Activated T-helper 2 cell treated with anti-CD3 and anti-CD28 coated beads, Interferon-gamma antibody, Interleukin-2, Interleukin-4, amounts not matched to agents 10 μg/mL and 5 μg/mL and 100 μg/mL, durations not matched to agents 14 hours and 24 hours and 36 hours (primary cell): ENCODE measurements at regions of chr3 and their contacts with region 1.

Region 1: GRCh38 chr3:71006810-71007785 is 576.4 kb downstream of the FOXP1 start:
- DNase-seq: no peak
- H3K4me3 Mint-ChIP-seq: no peak overlapping the region
- H3K27ac Mint-ChIP-seq: no peak overlapping the region
- H3K4me1 Mint-ChIP-seq: peaks cover 59% of the 10 kb centered on the region
- H3K27me3 Mint-ChIP-seq: no peaks in the 10 kb centered on the region

Region 2: DNA sequence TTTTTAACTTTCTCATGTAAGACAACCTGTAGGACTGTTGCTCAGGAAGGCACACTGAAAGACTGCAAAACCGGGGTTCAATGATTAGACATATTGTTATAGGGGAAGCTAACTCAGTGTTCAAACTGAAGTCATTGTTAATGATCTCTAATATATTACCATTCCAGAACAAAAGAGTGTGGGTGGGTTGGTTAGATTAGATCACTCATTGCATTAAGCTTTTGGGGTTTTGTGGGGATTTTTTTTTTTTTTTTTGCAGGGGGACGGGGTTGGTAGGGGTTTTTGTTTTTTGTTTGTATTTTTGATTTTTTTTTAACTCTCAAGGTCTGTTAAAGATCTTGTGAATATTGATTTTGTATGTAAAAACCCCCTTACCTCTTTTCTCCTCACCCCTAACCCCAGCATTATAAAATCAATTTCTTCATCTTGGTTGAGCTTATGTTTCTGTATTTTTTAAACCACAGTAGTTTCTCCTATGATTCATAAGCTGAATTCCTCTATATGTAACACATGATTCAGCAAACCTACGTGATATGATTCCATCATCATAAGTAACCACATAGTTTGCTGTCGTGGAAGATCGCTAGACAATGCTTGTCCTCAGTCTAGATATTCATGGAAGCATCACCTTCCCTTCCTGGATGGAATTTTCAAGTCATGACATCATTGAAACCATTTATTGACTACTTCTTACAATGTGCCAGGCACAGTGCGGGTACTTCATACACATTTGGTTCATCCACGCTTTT is 150.5 kb before region 1 on chr3:
- intact Hi-C with region 1: loop called (anchors 2 kb)
- DNase-seq: no peak
- H3K4me3 Mint-ChIP-seq: no peak overlapping the region
- H3K27ac Mint-ChIP-seq: peak overlapping the region; percentile 45
- H3K4me1 Mint-ChIP-seq: peaks cover 28% of the 10 kb centered on the region
- H3K27me3 Mint-ChIP-seq: peaks cover 26% of the 10 kb centered on the region

Region 3: GRCh38 chr3:70982700-70983140 is 24.4 kb before region 1 on chr3:
- intact Hi-C with region 1: loop called (anchors 2 kb)
- DNase-seq: no peak
- H3K4me3 Mint-ChIP-seq: peak overlapping the region; percentile 27
- H3K27ac Mint-ChIP-seq: peak overlapping the region; percentile 95
- H3K4me1 Mint-ChIP-seq: peaks cover 46% of the 10 kb centered on the region
- H3K27me3 Mint-ChIP-seq: no peaks in the 10 kb centered on the region

Region 4: GRCh38 chr3:71026634-71027578 is 19.8 kb after region 1 on chr3:
- intact Hi-C with region 1: loop called (anchors 2 kb)
- DNase-seq: no peak
- H3K4me3 Mint-ChIP-seq: no peak overlapping the region
- H3K27ac Mint-ChIP-seq: peak overlapping the region; percentile 58
- H3K4me1 Mint-ChIP-seq: peaks cover 52% of the 10 kb centered on the region
- H3K27me3 Mint-ChIP-seq: no peaks in the 10 kb centered on the region

Region 5: DNA sequence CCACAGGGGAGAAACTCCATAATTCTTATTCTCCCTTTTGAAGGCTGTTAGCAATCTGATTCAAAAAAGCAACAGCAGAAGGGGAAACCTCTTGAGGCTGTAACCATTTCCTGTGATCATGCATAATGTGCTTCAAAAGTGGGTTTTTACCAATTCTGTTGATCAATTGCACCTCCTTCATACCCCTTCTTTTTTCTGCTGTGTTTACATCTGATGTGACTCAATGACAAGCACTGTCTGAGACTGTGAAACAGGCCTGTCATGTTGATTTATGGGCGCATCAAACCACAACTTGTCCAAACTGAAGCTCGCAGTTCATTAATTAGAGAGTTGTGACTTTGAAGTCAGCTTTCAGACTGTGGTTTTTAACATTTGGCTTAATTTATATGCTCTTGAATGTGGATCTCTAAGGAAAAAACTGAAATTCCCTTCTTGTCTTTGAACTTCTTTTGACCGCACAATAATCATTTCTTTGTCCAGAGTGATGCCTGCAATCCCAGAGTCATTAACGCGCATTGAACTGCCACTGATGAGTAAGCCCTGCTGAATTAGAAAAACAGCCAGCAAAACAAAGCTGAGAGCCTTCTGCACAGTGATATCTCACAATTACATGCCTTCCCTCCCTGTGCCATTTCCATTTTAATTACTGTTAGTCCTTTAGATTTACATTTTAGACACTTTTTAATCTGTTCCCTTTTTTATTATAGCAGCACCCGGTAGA is 43.6 kb after region 1 on chr3:
- intact Hi-C with region 1: loop called (anchors 1 kb)
- DNase-seq: no peak
- H3K4me3 Mint-ChIP-seq: peak overlapping the region; percentile 2
- H3K27ac Mint-ChIP-seq: peak overlapping the region; percentile 86
- H3K4me1 Mint-ChIP-seq: peaks cover 95% of the 10 kb centered on the region
- H3K27me3 Mint-ChIP-seq: no peaks in the 10 kb centered on the region

Region 6: DNA sequence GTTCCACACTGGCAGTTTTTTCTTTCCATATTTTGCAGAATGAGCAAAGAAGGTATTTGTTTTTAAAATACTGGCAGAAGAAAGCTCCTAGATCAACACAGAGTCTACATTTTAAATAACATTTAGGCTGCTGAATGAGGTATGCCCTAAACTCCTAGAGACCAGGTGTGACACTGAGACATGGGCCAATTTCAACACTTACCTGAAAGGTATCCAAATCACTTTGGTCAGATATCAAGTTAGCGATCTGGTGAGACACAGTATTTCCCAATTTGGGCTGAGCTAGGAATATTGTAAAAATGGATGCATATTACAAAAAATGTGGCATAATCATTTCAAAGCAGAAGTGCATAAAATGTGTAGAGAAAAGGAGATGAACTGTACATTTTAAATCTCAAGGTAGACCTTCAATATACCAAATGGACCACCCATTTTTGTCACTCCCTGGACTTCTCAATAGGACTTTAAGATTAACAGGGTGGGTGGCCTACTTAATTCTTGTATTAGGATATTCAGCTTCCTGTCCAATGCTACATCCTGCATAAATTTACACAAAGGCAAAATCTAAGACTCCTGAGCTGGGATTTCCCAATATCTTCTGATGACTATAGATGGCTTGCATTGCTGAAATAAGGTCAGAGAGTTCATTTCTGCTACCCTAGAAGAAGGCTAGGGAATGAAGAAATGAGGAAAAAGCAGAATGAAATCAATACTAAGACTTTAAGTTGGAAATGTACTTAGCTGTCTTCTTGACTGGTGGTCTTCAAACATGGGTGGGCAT is 88.6 kb after region 1 on chr3:
- intact Hi-C with region 1: no loop called
- DNase-seq: no peak
- H3K4me3 Mint-ChIP-seq: no peak overlapping the region
- H3K27ac Mint-ChIP-seq: no peak overlapping the region
- H3K4me1 Mint-ChIP-seq: peaks cover 62% of the 10 kb centered on the region
- H3K27me3 Mint-ChIP-seq: no peaks in the 10 kb centered on the region

Region 7: GRCh38 chr3:71195492-71195891 is 188.4 kb after region 1 on chr3:
- intact Hi-C with region 1: loop called (anchors 5 kb)
- DNase-seq: no peak
- H3K4me3 Mint-ChIP-seq: no peak overlapping the region
- H3K27ac Mint-ChIP-seq: no peak overlapping the region
- H3K4me1 Mint-ChIP-seq: peaks cover 53% of the 10 kb centered on the region
- H3K27me3 Mint-ChIP-seq: no peaks in the 10 kb centered on the region

Region 8: GRCh38 chr3:71423151-71423906 is 416.2 kb after region 1 on chr3:
- intact Hi-C with region 1: no loop called
- DNase-seq: no peak
- H3K4me3 Mint-ChIP-seq: no peak overlapping the region
- H3K27ac Mint-ChIP-seq: peak overlapping the region; percentile 83
- H3K4me1 Mint-ChIP-seq: peaks cover 61% of the 10 kb centered on the region
- H3K27me3 Mint-ChIP-seq: no peaks in the 10 kb centered on the region

Region 9: DNA sequence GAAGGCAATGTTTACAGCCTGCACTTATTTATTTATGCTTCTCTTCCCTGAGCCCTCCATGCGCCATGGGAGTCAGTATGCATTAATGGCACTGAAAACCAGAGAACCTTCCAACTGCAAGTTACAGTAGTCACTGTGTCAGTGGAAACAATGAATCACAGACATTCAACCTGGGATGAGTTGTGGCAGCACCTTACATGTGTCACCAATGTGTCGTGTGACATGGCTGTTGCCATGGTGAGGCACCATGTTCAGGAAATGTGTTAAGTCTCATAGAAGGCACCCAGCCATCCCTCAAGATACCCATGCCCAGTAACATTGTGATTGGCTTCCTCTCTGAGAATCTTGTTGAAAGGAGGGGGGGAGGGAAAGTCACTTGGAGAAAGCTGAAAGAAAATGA is 471.5 kb after region 1 on chr3:
- intact Hi-C with region 1: no loop called
- DNase-seq: peak; percentile 48
- H3K4me3 Mint-ChIP-seq: no peak overlapping the region
- H3K27ac Mint-ChIP-seq: peak overlapping the region; percentile 85
- H3K4me1 Mint-ChIP-seq: peaks cover 40% of the 10 kb centered on the region
- H3K27me3 Mint-ChIP-seq: no peaks in the 10 kb centered on the region

Region 10: DNA sequence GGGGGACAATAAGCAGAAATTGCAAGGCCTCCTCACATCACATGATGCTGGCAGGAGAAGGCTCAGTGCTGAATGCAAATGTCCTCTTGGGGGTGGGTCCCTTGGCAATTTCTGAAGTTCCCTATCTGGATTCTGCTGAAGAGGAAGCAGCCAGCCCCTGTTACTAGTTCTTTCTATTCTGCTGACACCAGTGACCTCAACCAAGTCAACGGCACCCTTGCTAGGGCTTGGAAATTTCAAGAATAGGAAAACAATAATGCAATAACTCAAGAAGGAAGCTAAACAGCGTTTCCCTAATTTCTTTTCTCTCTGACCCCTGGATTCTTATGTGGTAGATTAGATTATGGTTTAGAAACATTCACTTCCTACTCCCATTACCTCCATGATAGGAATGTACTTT is 622.6 kb after region 1 on chr3:
- intact Hi-C with region 1: no loop called
- DNase-seq: no peak
- H3K4me3 Mint-ChIP-seq: no peak overlapping the region
- H3K27ac Mint-ChIP-seq: no peak overlapping the region
- H3K4me1 Mint-ChIP-seq: no peaks in the 10 kb centered on the region
- H3K27me3 Mint-ChIP-seq: no peaks in the 10 kb centered on the region